CD4-positive, alpha-beta T cell (primary cell): ENCODE measurements at regions of chr16 and their contacts with region 1.

Region 1: DNA sequence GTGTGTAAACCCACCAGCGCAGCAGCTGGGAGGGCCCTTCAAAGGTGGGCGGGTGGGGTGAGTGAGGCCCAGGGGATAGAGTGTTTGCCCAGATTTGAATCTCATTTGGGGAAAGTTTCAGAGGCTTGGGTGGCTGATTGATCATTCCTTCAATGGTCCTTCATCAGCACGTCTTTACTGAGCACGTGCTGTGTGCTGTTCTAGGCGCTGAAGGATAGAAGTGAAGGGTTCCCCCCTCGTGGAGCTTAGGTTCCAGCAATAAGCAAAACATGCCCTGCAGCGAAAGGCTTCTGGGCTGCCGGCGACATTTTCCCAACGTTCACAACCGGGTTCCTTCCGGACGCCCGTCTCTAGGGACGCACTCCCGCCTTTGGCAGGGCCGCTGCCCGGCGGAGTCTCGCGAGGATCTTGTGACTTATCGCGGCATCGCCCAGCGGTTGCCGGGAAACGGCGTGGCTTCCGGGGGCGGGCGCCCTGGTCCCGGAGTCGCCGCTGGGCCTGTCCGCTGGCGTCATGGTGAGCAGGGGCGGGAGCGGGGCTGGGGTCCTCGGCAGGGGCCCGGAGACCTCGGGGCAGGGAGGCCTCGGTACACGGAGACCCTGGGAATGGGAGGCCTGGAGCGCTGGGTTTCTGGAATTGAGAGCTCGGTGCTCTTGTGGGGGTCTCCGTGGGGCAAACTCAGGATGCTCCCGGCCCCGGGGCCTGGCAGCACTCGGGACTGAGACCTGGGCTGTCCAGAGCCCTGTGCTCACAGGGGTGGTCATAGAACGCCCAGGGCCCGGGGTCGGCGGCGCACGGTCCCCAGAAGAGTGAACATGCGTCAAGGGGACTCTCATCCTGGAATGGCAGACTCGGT is 3.2 kb upstream of the DBNDD1 start:
- DNase-seq: peak; percentile 53 to 88 (median 71)
- ATAC-seq: peak; percentile 66
- H3K4me3 ChIP-seq: peak overlapping the region; percentile 57
- H3K4me3 Mint-ChIP-seq: peak overlapping the region; percentile 55
- H3K27ac ChIP-seq: no peak overlapping the region
- H3K27ac Mint-ChIP-seq: peak overlapping the region; percentile 30
- H3K4me1 ChIP-seq: peaks cover 54% of the 10 kb centered on the region
- H3K4me1 Mint-ChIP-seq: peaks cover 20% of the 10 kb centered on the region
- H3K27me3 ChIP-seq: peaks cover 0 to 5% of the 10 kb centered on the region in 2 experiments
- H3K27me3 Mint-ChIP-seq: no peaks in the 10 kb centered on the region
- CTCF ChIP-seq: no peak

Region 2: DNA sequence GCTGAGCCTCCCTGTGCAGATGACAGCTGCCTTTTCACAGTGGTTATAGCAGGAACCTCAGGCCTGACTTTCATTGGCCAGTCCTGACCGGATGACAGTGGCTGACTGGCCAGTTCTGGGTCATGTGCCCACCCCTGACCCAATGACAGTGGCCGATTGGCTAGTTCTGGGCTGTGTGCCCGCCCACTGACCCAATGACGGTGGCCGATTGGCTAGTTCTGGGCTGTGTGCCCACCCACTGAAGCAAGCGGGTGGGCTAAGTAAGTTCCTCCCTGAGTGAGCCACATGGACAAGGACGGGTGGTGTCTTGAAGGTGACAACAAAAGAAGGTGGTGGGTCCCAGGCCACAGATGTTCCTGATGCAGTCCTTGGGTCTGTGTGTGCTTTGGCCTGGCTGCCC is 64.4 kb before region 1 on chr16:
- CTCF ChIA-PET with region 1: no interaction called
- POLR2A ChIA-PET with region 1: no interaction called
- intact Hi-C with region 1: loop called in 1 of 2 experiments (anchors 5 kb)
- DNase-seq: peak in 1 of 14 experiments; percentile 53
- ATAC-seq: peak; percentile 29
- H3K4me3 ChIP-seq: no peak overlapping the region
- H3K4me3 Mint-ChIP-seq: no peak overlapping the region
- H3K27ac ChIP-seq: no peak overlapping the region
- H3K27ac Mint-ChIP-seq: no peak overlapping the region
- H3K4me1 ChIP-seq: no peaks in the 10 kb centered on the region
- H3K4me1 Mint-ChIP-seq: no peaks in the 10 kb centered on the region
- H3K27me3 ChIP-seq: no peaks in the 10 kb centered on the region
- H3K27me3 Mint-ChIP-seq: no peaks in the 10 kb centered on the region
- CTCF ChIP-seq: no peak

Region 3: DNA sequence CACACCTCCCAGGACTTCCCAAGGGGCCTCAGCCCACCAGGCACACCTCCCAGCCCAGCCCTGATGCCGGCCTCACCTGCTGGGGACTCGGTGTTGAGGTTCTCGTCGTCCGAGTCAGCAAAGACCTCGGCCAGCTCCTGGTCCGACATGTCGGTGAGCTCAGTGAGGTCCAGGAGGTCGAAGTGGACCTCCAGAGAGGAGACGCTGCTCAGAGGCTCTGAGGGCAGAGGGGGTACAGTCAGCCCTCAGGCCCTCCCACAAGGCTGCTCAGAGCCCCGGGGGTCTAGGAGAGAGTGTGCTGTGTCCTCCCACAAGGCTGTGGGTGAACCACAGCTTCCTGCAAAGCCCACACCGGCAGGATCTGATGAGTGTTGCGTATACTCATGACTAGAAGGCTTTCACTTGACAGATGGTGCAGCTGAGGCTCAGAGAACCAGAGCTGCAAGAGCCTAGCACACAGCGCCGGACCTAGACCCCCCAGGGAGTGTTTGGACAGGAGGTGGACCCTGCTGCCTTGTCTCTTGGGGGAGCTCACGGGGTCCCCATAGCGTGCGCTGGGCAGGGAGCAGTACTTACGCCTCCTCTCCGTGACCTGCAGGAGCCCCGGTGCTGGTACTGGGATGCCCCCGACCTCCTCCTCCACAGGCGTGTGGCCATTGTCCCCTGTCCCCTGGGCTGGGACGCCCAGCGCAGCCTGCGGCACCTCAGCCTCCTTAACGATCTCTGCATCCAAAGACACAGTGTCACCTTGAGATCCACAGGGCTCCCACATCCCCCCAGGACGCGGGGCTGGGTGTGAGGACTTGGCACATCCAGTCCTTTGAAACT is 13.5 kb before region 1 on chr16:
- CTCF ChIA-PET with region 1: interaction called, 4 read pairs
- POLR2A ChIA-PET with region 1: interaction called, 14 read pairs
- intact Hi-C with region 1: no loop called
- DNase-seq: peak; percentile 24 to 79 (median 55)
- ATAC-seq: peak; percentile 99
- H3K4me3 ChIP-seq: peak overlapping the region; percentile 55
- H3K4me3 Mint-ChIP-seq: peak overlapping the region; percentile 87
- H3K27ac ChIP-seq: no peak overlapping the region
- H3K27ac Mint-ChIP-seq: peak overlapping the region; percentile 74
- H3K4me1 ChIP-seq: peaks cover 56% of the 10 kb centered on the region
- H3K4me1 Mint-ChIP-seq: peaks cover 22% of the 10 kb centered on the region
- H3K27me3 ChIP-seq: no peaks in the 10 kb centered on the region
- H3K27me3 Mint-ChIP-seq: no peaks in the 10 kb centered on the region
- CTCF ChIP-seq: no peak

Region 4: GRCh38 chr16:90035902-90036301 is 13.5 kb after region 1 on chr16:
- CTCF ChIA-PET with region 1: no interaction called
- POLR2A ChIA-PET with region 1: no interaction called
- intact Hi-C with region 1: no loop called
- DNase-seq: no peak
- ATAC-seq: no peak
- H3K4me3 ChIP-seq: no peak overlapping the region
- H3K4me3 Mint-ChIP-seq: no peak overlapping the region
- H3K27ac ChIP-seq: no peak overlapping the region
- H3K27ac Mint-ChIP-seq: no peak overlapping the region
- H3K4me1 ChIP-seq: no peaks in the 10 kb centered on the region
- H3K4me1 Mint-ChIP-seq: no peaks in the 10 kb centered on the region
- H3K27me3 ChIP-seq: no peaks in the 10 kb centered on the region
- H3K27me3 Mint-ChIP-seq: no peaks in the 10 kb centered on the region
- CTCF ChIP-seq: no peak

Region 5: DNA sequence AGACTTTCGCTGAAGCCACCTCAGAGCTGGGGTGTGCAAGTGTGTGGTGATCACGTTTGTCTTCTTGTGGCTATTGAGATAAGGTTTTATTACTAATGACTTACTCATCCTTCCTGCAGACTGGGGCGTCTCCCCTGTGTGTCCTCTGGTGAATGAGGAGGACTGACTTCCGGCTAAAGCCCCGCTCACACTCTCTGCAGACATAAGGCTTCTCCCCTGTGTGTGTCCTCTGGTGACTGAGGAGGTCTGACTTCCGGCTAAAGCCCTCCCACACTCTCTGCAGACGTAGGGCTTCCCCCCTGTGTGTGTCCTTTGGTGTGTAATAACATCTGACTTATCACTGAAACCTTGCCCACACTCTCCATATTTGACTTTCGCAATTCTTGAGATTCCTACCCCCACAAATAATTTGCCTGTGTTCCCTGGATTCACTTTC is 35.3 kb after region 1 on chr16:
- CTCF ChIA-PET with region 1: no interaction called
- POLR2A ChIA-PET with region 1: no interaction called
- intact Hi-C with region 1: no loop called
- DNase-seq: peak in 1 of 14 experiments; percentile 47
- ATAC-seq: peak; percentile 44
- H3K4me3 ChIP-seq: no peak overlapping the region
- H3K4me3 Mint-ChIP-seq: no peak overlapping the region
- H3K27ac ChIP-seq: no peak overlapping the region
- H3K27ac Mint-ChIP-seq: no peak overlapping the region
- H3K4me1 ChIP-seq: no peaks in the 10 kb centered on the region
- H3K4me1 Mint-ChIP-seq: no peaks in the 10 kb centered on the region
- H3K27me3 ChIP-seq: peaks cover 0 to 3% of the 10 kb centered on the region in 2 experiments
- H3K27me3 Mint-ChIP-seq: peaks cover 6% of the 10 kb centered on the region
- CTCF ChIP-seq: no peak